ENCODE measurements at regions of chr2 and their contacts with region 1.

Region 1: DNA sequence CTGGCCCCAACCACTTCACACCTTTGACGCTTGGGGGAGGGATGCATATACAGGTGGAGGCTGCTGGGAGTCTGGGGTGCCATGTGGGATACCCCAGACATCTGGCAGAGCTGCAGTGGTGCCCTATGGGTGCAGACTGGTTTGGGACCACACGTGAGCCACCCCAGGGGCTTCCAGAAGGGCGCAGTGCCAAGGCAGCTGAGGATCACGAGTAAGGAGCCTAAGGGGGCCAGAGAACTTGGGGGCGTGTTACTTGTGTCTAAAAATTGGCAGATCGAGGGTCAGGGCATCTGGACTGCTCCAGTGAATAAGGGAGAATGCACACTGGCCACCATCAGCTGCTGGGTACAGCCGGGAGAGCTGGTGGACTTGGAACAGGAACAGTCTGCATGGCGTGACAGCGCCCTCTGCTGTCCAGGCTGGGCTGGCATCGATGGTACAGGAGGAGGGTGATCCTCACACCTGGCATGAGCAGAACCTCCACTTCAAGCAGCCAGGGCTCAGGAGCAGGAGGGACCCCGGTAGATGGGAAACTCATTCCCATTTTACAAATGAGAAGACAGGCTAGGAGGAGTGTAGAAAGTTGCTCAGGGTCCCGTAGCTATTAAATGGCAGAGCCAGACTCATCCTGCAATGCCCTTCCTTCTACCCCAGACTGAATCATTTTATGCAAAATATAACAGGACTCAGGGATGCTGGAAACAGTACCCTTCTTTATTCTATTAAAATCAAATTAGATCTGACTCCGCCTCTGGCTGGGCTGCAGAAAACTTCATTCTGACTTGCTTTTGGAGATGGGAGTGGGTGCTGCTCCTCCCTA is 60.4 kb downstream of the ATOH8 start:
- DNase-seq: peak; percentile 34
- H3K4me3 ChIP-seq: no peak overlapping the region
- CTCF ChIP-seq: peak; percentile 100

Region 2: DNA sequence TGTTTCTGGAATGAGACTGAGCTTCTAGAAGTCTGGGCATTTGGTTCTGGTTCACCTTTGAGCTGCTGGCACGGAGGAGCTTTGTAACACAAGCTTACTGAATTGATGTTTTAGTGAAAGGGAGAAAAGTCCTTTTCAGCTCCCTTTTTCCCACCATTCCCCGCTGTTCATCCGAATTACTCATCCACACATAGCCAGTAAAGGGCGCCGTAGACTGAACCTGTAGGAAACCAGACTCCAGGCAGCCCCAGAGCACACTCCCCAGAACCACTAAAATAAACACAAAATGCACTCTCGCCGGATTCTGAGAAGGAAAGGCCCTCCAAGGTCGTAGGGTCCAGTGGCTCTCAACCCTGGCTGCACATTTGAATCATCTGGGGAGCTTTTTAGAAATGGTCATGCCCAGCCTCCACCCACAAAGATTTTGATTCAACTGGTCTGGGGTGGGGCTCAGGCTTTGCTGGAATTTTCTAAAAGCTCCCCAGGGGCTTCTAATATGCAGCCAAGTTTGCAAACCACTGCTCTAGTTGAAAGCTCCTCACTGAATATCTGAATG is 651.4 kb before region 1 on chr2:
- CTCF ChIA-PET with region 1: no interaction called
- POLR2A ChIA-PET with region 1: no interaction called
- DNase-seq: no peak
- H3K4me3 ChIP-seq: no peak overlapping the region
- CTCF ChIP-seq: no peak

Region 3: GRCh38 chr2:85642725-85643124 is 171.5 kb before region 1 on chr2:
- CTCF ChIA-PET with region 1: interaction called, 121 read pairs
- POLR2A ChIA-PET with region 1: no interaction called
- DNase-seq: no peak
- H3K4me3 ChIP-seq: no peak overlapping the region
- CTCF ChIP-seq: no peak

Region 4: GRCh38 chr2:85678794-85679672 is 135.2 kb before region 1 on chr2:
- CTCF ChIA-PET with region 1: interaction called, 13 read pairs
- POLR2A ChIA-PET with region 1: no interaction called
- DNase-seq: no peak
- H3K4me3 ChIP-seq: no peak overlapping the region
- CTCF ChIP-seq: peak; percentile 99

Region 5: DNA sequence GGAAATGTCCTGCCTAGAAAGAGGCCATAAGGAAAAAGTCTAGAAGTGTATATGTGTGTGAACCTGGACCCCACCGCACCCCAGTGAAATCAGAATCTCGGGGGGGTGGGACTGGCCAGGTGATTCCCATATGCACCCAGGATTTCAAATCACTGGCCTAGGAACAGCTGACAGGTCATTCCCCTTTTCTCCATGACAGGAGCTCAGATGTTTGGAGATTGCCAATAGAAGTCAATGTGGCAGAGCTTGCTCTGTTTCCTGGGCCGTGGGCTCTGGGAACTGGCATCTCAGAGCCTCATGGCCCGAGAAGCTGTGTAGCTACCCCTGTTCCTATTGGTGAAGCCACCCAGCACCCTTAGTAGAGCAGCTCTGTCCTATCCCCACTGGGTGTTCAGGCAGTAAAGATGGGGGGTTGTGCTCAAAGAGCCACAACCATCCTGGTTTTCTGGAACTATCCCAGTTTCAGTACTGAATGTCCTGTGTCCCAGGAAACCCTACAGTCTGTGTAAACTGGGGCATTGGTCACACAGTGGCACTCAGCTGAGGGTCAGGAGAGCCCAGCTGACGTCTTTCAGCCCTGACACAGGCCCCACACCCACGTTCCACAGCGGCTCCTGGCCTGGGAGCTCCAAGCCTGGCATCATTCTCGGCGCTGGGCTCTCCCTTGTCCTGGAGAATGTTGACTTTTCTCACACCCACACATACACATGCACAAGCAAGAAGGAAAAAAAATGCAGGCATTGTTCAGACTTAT is 101.2 kb before region 1 on chr2:
- CTCF ChIA-PET with region 1: interaction called, 206 read pairs
- POLR2A ChIA-PET with region 1: no interaction called
- DNase-seq: no peak
- H3K4me3 ChIP-seq: no peak overlapping the region
- CTCF ChIP-seq: no peak

Region 6: DNA sequence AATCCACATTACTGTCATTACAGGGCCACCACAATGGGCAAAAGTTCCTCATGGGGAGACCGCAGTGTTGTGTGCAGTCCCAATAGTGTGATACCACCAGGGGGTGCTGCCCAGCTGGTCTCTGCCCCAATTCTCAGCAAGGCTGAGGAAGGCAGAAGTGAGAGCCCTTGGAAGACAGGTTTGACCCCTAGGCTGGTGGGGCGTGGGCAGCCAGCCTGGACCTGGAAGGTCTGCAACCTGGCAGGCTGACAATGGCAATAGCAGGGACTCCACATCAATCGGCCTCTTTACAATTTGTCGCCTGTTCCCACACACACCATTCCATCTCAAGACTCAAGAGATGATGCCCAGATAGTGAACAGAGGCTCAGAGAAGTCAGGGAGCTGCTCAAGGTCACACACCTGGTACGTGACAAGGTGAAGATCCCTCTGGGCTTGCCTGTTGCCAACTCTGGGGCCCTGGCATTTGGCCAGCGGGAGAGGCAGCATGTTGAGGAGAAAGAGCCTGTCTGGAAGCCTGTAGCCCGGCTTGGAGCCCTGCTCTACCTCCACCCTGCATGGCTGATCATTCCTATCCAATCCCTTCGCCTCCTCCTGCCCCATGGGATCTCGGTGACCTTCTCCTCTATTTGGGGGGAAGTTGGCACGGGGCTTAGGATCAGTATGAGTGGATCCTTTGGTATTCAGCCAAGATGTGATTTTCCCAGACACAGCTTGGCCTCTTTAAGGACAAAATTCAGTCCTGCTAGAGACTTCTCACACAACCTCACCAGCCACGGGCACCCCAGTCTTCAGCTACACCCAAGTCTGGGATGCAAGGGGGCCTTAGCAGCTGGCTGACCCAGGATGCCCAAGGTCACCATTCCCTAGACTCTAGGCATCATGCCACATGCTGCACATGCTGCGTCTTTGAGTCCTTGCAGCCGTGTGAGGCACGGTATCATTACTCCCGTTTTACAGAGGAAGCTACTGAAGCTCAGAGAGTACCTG is 63.3 kb before region 1 on chr2:
- CTCF ChIA-PET with region 1: interaction called, 643 read pairs
- POLR2A ChIA-PET with region 1: interaction called, 5 read pairs
- DNase-seq: no peak
- H3K4me3 ChIP-seq: no peak overlapping the region
- CTCF ChIP-seq: peak; percentile 87

Region 7: DNA sequence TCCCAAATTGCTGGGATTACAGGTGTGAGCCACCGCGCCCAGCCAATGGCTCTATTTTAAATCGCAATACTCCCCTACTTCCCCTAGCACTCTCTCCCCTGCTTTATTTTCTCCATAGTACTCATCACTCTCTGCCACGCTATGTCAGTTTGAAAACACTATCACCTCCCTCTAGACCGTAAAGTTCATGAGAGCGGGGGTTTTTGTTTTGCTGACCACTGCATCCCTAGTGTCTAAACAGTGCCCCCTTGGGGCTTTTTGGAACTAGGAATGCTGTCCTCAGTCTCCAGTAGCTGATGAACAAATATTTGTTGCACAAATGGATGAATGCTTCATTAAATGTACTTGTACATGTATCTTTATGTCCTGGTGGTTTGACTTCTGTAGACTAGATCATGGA is 16.3 kb before region 1 on chr2:
- CTCF ChIA-PET with region 1: interaction called, 48 read pairs
- POLR2A ChIA-PET with region 1: no interaction called
- DNase-seq: no peak
- H3K4me3 ChIP-seq: no peak overlapping the region
- CTCF ChIP-seq: peak; percentile 43